ENCODE measurements at regions of chr10 and their contacts with region 1.

Region 1: GRCh38 chr10:91758303-91759146 is 39.7 kb upstream of the TNKS2 start:
- DNase-seq: peak; percentile 75
- ATAC-seq: peak; percentile 77
- H3K4me3 ChIP-seq: no peak overlapping the region
- H3K27ac ChIP-seq: no peak overlapping the region
- H3K4me1 ChIP-seq: no peaks in the 10 kb centered on the region; the same call in 1 of the 2 replicates
- H3K27me3 ChIP-seq: no peaks in the 10 kb centered on the region
- CTCF ChIP-seq: peak; percentile 71

Region 2: GRCh38 chr10:91797874-91798648 is 39.5 kb after region 1 on chr10 and contains the start of gene TNKS2:
- CTCF ChIA-PET with region 1: interaction called, 3 read pairs
- POLR2A ChIA-PET with region 1: interaction called, 5 read pairs
- intact Hi-C with region 1: loop called (anchors 5 kb)
- DNase-seq: peak; percentile 92
- ATAC-seq: peak; percentile 79
- H3K4me3 ChIP-seq: peak within 1 kb of the TSS; percentile 98
- H3K27ac ChIP-seq: peak within 1 kb of the TSS; percentile 78
- H3K4me1 ChIP-seq: peaks cover 29% of the 10 kb centered on the region
- H3K27me3 ChIP-seq: no peaks in the 10 kb centered on the region
- CTCF ChIP-seq: no peak
- total RNA-seq, gene TNKS2: 14.5 and 23.3 TPM in 2 replicates

Region 3: GRCh38 chr10:91838199-91838598 is 79.7 kb after region 1 on chr10:
- CTCF ChIA-PET with region 1: no interaction called
- POLR2A ChIA-PET with region 1: no interaction called
- intact Hi-C with region 1: loop called (anchors 10 kb)
- DNase-seq: no peak
- ATAC-seq: no peak
- H3K4me3 ChIP-seq: no peak overlapping the region
- H3K27ac ChIP-seq: no peak overlapping the region
- H3K4me1 ChIP-seq: no peaks in the 10 kb centered on the region
- H3K27me3 ChIP-seq: no peaks in the 10 kb centered on the region
- CTCF ChIP-seq: no peak

Region 4: DNA sequence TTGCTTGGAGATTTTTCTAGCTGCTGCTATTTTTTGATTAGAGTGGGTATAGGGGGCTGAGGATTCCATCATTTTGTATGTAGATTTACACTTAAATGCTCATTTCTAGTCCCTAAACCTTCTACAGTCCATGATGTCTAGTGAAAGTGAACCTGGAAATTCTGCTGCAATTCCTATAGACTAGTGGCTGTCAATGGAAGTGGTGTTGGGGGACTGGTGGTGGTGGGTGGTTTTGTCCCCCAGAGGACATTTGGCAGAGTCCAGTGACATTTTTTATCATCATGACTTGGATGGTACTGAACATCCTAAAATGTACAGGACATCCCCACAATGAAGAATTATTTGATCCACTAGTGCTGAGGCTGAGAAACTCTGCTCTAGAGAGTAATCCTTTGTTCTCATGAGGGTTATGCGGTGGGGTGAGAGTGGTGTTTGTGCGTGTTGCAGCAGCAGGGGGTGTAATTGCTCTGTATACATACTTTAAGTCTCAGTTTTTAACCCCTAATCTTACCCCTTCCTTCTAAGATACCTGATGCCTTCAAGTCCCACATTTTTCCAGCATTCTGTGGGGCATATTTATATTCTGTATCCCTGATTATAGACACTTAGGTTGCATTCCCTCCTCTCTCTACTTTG is 869.4 kb after region 1 on chr10:
- CTCF ChIA-PET with region 1: no interaction called
- POLR2A ChIA-PET with region 1: no interaction called
- intact Hi-C with region 1: no loop called
- DNase-seq: no peak
- ATAC-seq: no peak
- H3K4me3 ChIP-seq: no peak overlapping the region
- H3K27ac ChIP-seq: no peak overlapping the region
- H3K4me1 ChIP-seq: no peaks in the 10 kb centered on the region
- H3K27me3 ChIP-seq: no peaks in the 10 kb centered on the region
- CTCF ChIP-seq: no peak

Measured in PC-3 (cell line).